Left cardiac atrium (tissue), 4 donors: ENCODE measurements at regions of chr17 and their contacts with region 1.

Region 1: DNA sequence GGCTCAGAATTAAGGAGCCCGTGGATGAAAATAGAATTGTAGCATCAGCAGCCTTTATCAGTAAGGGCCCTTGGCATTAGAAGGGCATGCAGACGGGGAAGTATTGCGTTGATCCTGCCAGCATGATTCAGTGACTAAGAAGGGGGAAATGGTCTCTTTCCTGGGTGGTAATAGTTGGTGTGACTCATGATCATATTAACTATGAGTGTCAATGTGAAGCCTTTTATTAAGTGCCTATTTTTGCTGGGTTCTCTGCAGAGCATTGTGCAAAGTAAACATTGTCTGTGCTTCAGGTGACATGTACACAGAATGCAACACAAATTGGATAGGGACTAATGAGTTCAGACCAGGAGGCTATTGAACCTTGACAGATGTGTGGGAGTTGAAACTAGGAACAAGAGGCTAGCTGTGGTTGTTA is 24.5 kb downstream of the RCVRN start:
- DNase-seq: no peak
- ATAC-seq: peak; percentile 59 to 96

Region 2: DNA sequence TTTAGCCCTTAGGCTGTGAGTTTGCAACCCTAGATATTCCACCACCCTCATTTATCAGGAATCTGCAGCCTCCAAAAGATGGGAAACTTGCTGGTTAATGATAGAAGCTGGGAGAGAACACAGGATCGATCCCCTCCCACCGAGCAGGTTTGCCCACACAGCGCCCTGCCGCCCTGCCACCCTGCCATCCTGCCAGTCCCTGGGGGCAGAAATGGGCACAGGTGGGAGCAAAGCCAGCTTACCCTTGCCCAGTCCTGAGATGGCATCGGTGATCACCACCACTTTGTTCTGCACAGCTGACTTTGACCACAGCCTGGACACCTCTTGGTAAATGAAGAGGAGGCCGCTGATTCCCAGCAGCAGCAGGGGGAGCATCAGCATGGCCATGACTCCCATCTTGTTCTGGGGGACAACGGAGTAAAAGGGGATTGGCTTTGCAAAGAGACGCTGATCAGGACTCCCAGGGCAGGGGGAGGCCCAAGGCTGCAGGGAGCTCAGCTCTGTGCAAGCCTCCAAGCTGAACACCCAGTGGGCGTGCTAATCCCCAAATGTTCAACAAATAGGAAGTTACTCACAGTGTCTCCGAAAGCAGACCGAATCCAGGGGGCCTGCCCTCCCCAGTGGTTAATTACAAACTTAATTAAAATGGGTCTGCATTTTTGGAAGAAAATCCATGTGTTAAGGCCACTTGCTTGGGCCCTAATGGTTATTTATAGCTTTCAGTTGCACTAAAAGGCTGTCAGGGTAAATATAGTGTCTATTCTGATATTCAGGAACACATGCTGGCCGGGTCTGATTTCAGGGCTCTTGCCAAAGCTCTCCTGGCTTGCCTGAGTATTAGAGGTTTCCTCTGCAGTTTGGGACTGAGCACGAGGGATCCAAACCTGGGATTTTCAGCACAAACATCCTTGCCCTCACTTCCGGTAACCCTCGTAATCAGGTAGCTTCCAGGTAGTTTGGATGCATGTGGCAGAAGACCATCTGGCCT is 89.4 kb before region 1 on chr17 and contains the start of gene DHRS7C:
- intact Hi-C with region 1: no loop called
- DNase-seq: peak; percentile 39
- ATAC-seq: peak; percentile 80 to 87
- total RNA-seq, gene DHRS7C: 82.3 to 159 TPM

Region 3: GRCh38 chr17:9802305-9803096 is 78.1 kb before region 1 on chr17:
- intact Hi-C with region 1: loop called in 1 of 2 experiments (anchors 10 kb)
- DNase-seq: peak; percentile 38
- ATAC-seq: peak; percentile 70 to 72

Region 4: DNA sequence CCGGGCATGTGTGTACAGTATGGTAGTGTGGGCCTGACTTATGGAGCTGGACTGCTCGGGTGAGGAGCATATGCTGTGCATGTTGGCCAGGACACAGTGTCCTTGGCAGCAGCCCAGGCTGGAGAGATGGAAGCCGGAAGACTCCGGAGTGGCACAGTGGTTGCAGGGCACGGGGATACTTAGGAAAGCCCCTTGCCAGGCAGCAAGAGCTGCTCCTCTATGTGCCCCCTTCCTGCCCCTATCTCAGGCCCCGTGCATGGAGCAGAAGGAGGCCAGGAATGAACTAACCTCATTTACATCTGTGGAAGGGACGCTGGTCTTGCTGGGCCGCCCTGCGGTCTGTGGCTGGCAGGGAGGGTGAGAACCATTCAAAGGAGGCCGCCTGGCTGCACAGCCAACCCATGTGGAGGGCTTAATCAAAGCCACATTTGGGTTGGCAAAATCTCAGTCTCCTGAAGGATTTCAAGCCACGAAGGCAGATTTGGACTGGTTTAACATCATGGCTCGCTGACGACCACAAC is 56.7 kb after region 1 on chr17:
- intact Hi-C with region 1: no loop called
- DNase-seq: peak; percentile 67
- ATAC-seq: peak; percentile 77 to 89

Region 5: GRCh38 chr17:10197721-10198508 is 317.3 kb after region 1 on chr17:
- intact Hi-C with region 1: no loop called
- DNase-seq: peak; percentile 42
- ATAC-seq: peak; percentile 42